Ovary (tissue), 10 donors: ENCODE measurements at regions of chr5 and their contacts with region 1.

Region 1: DNA sequence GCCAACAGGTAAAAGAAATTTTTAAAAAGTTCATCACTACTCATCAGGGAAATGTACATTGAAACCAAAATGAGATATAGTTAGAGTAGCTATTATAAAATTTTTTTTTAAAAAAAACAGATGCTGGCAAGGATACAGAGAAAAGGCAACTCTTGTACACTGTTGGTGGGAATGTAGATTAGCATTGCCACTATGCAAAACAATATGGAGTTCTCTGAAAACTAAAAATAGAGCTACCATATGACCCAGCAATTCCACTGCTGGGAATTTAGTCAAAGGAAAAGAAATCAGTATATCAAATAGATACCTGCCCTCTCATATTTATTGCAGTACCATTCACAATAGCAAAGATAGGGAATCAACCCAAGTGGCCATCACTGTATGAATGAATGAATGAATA is 44.2 kb upstream of the NIPAL4 start:
- DNase-seq: no peak
- H3K4me3 ChIP-seq: no peak overlapping the region
- H3K27ac ChIP-seq: no peak overlapping the region
- H3K4me1 ChIP-seq: no peaks in the 10 kb centered on the region
- H3K27me3 ChIP-seq: no peaks in the 10 kb centered on the region
- CTCF ChIP-seq: no peak
- EP300 ChIP-seq: no peak
- POLR2A ChIP-seq: no peak

Region 2: GRCh38 chr5:157400741-157401495 is 14.9 kb before region 1 on chr5:
- intact Hi-C with region 1: no loop called
- DNase-seq: no peak
- H3K4me3 ChIP-seq: no peak overlapping the region
- H3K27ac ChIP-seq: no peak overlapping the region
- H3K4me1 ChIP-seq: no peaks in the 10 kb centered on the region
- H3K27me3 ChIP-seq: no peaks in the 10 kb centered on the region
- CTCF ChIP-seq: no peak
- EP300 ChIP-seq: no peak
- POLR2A ChIP-seq: no peak

Region 3: GRCh38 chr5:157689942-157690689 is 274.3 kb after region 1 on chr5:
- intact Hi-C with region 1: loop called in 1 of 4 experiments (anchors 5 kb)
- DNase-seq: no peak
- H3K4me3 ChIP-seq: no peak overlapping the region
- H3K27ac ChIP-seq: no peak overlapping the region
- H3K4me1 ChIP-seq: no peaks in the 10 kb centered on the region
- H3K27me3 ChIP-seq: no peaks in the 10 kb centered on the region
- CTCF ChIP-seq: no peak
- EP300 ChIP-seq: no peak
- POLR2A ChIP-seq: no peak

Region 4: GRCh38 chr5:158832096-158832685 is 1416.4 kb after region 1 on chr5:
- intact Hi-C with region 1: no loop called
- DNase-seq: no peak
- H3K4me3 ChIP-seq: no peak overlapping the region
- H3K27ac ChIP-seq: no peak overlapping the region
- H3K4me1 ChIP-seq: no peaks in the 10 kb centered on the region
- H3K27me3 ChIP-seq: no peaks in the 10 kb centered on the region
- CTCF ChIP-seq: no peak
- EP300 ChIP-seq: no peak
- POLR2A ChIP-seq: no peak